Activated naive CD8-positive, alpha-beta T cell treated with anti-CD3 and anti-CD28 coated beads, Interleukin-2, amount 10 ng/mL, durations not matched to agents 7 days and 5 days (primary cell): ENCODE measurements at regions of chr1 and their contacts with region 1.

Region 1: GRCh38 chr1:28914228-28915030 is at the start of gene EPB41:
- DNase-seq: peak; percentile 92
- ATAC-seq: peak; percentile 90
- H3K4me3 Mint-ChIP-seq: peak within 1 kb of the TSS; percentile 97
- H3K27ac Mint-ChIP-seq: peak within 1 kb of the TSS; percentile 96
- H3K4me1 Mint-ChIP-seq: peaks cover 39% of the 10 kb centered on the region
- H3K27me3 Mint-ChIP-seq: no peaks in the 10 kb centered on the region
- total RNA-seq, gene EPB41: 162 to 170 TPM

Region 2: GRCh38 chr1:28886731-28887418 is 27.6 kb before region 1 on chr1:
- POLR2A ChIA-PET with region 1: interaction called, 20 read pairs
- DNase-seq: peak; percentile 97
- ATAC-seq: peak; percentile 72
- H3K4me3 Mint-ChIP-seq: peak overlapping the region; percentile 87
- H3K27ac Mint-ChIP-seq: peak overlapping the region; percentile 94
- H3K4me1 Mint-ChIP-seq: peaks cover 39% of the 10 kb centered on the region
- H3K27me3 Mint-ChIP-seq: no peaks in the 10 kb centered on the region

Region 3: GRCh38 chr1:28926629-28927265 is 12.3 kb after region 1 on chr1:
- POLR2A ChIA-PET with region 1: interaction called, 41 read pairs
- DNase-seq: no peak
- ATAC-seq: peak; percentile 88
- H3K4me3 Mint-ChIP-seq: peak overlapping the region; percentile 49
- H3K27ac Mint-ChIP-seq: peak overlapping the region; percentile 78
- H3K4me1 Mint-ChIP-seq: peaks cover 34% of the 10 kb centered on the region
- H3K27me3 Mint-ChIP-seq: no peaks in the 10 kb centered on the region

Region 4: DNA sequence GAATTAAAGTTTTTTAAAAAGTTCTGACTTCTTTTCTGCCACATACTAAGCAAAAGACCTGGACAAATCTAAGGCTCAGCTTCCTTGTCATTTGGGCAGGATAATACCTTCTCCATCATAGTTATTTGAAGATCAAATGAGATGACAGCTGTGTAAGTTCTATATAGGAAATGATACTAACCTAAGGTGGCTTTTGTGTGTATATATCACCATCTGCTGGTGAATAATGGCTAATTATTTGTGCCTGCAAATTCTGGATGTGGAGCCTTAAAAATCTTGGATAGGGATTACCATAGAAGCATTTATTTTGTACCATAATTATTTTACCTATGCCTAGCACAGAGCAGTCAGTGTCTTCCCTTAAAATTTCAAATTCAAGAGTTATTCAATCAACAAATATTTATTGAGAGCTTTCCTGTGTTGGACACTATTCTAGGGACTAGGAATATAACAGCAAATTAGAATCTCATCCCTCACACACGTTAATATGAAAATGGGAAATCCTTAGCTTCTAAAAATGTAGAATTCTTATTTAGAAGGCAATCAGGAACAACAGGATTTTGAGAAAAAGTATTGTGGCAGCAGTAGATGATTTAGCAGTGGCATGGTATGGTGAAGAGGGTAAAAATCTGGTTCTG is 119.5 kb after region 1 on chr1:
- POLR2A ChIA-PET with region 1: interaction called, 14 read pairs
- DNase-seq: no peak
- ATAC-seq: no peak
- H3K4me3 Mint-ChIP-seq: no peak overlapping the region
- H3K27ac Mint-ChIP-seq: no peak overlapping the region
- H3K4me1 Mint-ChIP-seq: no peaks in the 10 kb centered on the region
- H3K27me3 Mint-ChIP-seq: no peaks in the 10 kb centered on the region